ENCODE measurements at regions of chr7 and their contacts with region 1.

Region 1: GRCh38 chr7:28155019-28155660 is 25.5 kb downstream of the JAZF1 start:
- DNase-seq: peak; percentile 78 to 85 (median 81)
- H3K4me3 ChIP-seq: peak overlapping the region in 1 of 3 experiments; percentile 49
- H3K4me3 Mint-ChIP-seq: peak overlapping the region; percentile 25 to 41
- H3K27ac ChIP-seq: peak overlapping the region; percentile 80 to 86
- H3K27ac Mint-ChIP-seq: peak overlapping the region; percentile 88 to 97 (median 95)
- H3K4me1 ChIP-seq: peaks cover 72 to 74% of the 10 kb centered on the region in 2 donors
- H3K4me1 Mint-ChIP-seq: peaks cover 66% of the 10 kb centered on the region
- H3K27me3 ChIP-seq: no peaks in the 10 kb centered on the region
- H3K27me3 Mint-ChIP-seq: peaks cover 0 to 3% (median 0%) of the 10 kb centered on the region in 3 donors
- CTCF ChIP-seq: no peak

Region 2: DNA sequence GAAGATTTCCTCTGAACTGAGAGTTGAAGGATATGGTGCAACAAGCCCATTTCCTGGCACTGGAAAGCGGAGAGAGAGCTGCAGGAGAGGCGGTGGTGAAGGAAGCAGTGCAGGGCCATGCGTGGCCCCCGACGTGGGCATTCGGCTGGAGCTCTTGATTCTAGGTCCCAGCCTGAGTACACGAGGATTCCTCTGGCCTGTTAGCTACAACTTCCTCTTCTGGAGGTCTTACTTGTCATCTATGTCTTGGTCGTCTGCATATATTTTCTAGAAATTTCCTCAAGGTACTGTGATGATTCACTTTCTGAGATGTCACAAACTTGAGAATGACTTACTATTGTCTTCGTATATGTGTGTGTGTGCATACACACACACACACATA is 84.7 kb after region 1 on chr7:
- intact Hi-C with region 1: loop called in 1 of 2 experiments (anchors 10 kb)
- DNase-seq: peak; percentile 81 to 92 (median 82)
- H3K4me3 ChIP-seq: peak overlapping the region in 2 of 3 experiments; percentile 4 to 54
- H3K4me3 Mint-ChIP-seq: peak overlapping the region; percentile 65 to 81
- H3K27ac ChIP-seq: peak overlapping the region; percentile 85
- H3K27ac Mint-ChIP-seq: peak overlapping the region; percentile 83 to 98 (median 96)
- H3K4me1 ChIP-seq: peaks cover 61 to 67% of the 10 kb centered on the region in 2 donors
- H3K4me1 Mint-ChIP-seq: peaks cover 66% of the 10 kb centered on the region
- H3K27me3 ChIP-seq: no peaks in the 10 kb centered on the region
- H3K27me3 Mint-ChIP-seq: no peaks in the 10 kb centered on the region
- CTCF ChIP-seq: no peak

Region 3: GRCh38 chr7:28481091-28481926 is 326.2 kb after region 1 on chr7:
- intact Hi-C with region 1: no loop called
- DNase-seq: no peak
- H3K4me3 ChIP-seq: no peak overlapping the region
- H3K4me3 Mint-ChIP-seq: no peak overlapping the region
- H3K27ac ChIP-seq: no peak overlapping the region
- H3K27ac Mint-ChIP-seq: no peak overlapping the region
- H3K4me1 ChIP-seq: no peaks in the 10 kb centered on the region
- H3K4me1 Mint-ChIP-seq: no peaks in the 10 kb centered on the region
- H3K27me3 ChIP-seq: no peaks in the 10 kb centered on the region
- H3K27me3 Mint-ChIP-seq: peaks cover 0 to 2% (median 0%) of the 10 kb centered on the region in 3 donors
- CTCF ChIP-seq: no peak

Region 4: DNA sequence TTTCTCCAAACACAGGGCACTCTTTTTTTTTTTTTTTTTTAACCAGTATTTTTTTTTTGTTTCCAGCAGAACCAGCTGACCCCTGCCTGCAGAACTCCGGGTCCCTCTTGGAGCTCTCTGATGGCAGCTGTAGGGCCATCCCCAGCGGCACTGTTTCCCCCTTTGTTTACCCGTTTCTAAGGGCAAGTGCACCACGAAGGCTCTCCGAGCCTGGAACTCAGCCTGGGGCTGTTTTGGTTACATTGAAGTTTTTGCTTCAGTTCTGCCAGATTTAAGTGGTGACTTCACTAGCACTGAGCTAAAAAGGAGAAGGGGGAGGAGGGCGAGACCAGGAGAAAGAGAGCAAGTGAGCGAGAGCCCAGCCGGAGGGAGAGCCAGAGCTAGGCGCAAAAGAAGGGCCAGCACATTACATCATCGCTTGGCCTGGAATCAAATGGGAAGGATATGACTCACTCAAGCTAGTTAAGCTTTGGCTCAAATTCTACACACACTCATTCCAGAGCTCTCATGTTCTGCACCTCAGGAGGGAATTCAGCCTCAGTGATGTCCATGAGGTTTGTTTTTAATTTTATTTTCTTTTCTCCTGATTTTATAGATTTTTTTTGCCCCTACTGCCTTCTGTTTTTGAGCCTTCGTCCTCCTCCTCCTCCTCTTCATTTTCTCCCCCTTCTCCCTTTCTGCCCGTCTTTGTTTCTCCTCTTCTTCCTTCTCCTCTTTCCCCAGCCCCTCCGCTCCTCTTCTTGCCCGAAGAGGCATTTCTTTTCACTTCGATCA is 530.7 kb after region 1 on chr7:
- intact Hi-C with region 1: loop called in 1 of 2 experiments (anchors 10 kb)
- DNase-seq: peak; percentile 94 to 96 (median 96)
- H3K4me3 ChIP-seq: peak overlapping the region; percentile 76 to 100 (median 93)
- H3K4me3 Mint-ChIP-seq: no peak overlapping the region
- H3K27ac ChIP-seq: peak overlapping the region; percentile 92 to 95
- H3K27ac Mint-ChIP-seq: no peak overlapping the region
- H3K4me1 ChIP-seq: peaks cover 68 to 89% of the 10 kb centered on the region in 2 donors
- H3K4me1 Mint-ChIP-seq: peaks cover 14% of the 10 kb centered on the region
- H3K27me3 ChIP-seq: no peaks in the 10 kb centered on the region
- H3K27me3 Mint-ChIP-seq: no peaks in the 10 kb centered on the region
- CTCF ChIP-seq: no peak

Measured in CD14-positive monocyte (primary cell).